Sciatic nerve (tissue), 2 donors: ENCODE measurements at regions of chr16 and their contacts with region 1.

Region 1: GRCh38 chr16:4123616-4124265 is 7.5 kb upstream of the ADCY9 start:
- DNase-seq: no peak
- ATAC-seq: no peak

Region 2: GRCh38 chr16:3938481-3938847 is 185.3 kb before region 1 on chr16:
- intact Hi-C with region 1: no loop called
- DNase-seq: peak; percentile 57
- ATAC-seq: peak; percentile 43

Region 3: DNA sequence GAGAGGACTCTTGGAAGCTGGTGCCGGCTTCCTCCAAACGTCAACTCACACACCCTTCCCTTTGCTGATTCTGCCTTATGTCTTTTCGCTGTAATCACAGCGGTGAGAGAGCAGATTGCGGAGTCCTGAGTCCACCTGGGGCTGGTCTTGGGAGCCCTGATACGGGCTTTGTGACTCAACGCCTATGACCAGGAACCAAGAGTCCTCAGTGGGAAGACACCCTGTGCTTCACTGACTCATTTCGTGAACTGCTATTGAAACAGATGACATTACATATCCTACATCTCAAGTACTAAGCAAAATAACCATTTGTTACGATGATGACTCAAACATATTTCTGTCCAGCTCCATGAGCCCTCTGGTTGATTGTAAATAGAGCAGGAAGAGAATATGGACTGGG is 152.5 kb before region 1 on chr16:
- intact Hi-C with region 1: no loop called
- DNase-seq: no peak
- ATAC-seq: no peak

Region 4: DNA sequence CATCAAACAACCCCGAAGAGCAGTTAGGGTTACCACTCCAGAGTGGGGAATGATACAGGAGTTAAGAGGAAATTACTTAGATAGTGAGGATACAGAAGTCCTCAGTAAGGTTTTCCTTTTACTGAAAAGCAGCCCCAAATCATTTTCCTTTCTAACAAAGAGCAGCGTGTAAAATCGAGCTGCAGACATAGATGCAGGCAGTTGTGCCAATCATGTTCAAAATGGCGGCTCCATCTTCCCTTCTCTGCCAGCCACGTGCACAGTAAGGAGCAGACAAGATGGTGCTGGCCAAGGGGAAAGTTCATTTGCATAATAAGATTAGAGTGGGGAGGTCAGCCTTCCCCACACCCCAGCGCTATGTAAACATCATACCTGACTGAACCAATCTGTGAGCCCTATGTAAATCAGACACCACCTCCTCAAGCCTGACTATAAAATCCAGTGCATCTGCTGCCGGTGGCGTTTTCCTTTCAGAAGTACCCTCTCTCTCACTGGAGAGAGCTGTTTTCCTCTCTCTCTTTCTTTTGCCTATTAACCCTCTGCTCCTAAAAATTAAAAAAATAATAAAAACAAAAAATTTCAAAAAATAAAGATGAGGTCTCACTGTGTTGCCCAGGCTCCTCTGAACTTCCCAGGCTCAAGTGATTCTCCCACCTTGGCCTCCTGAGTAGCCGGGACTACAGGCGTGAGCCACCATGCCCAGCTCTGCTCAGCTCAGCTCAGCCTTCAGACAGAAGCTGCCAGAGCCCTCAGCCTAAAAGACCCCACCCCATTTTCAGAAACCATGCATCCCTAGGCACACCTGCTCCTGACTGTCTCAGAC is 120.7 kb after region 1 on chr16:
- intact Hi-C with region 1: loop called (anchors 10 kb)
- DNase-seq: no peak
- ATAC-seq: no peak